GM13976 (cell line): ENCODE measurements at regions of chr7 and their contacts with region 1.

Region 1: GRCh38 chr7:85890244-85890811 is 703.5 kb upstream of the SEMA3D start:
- DNase-seq: peak; percentile 39
- CTCF ChIP-seq: no peak

Region 2: DNA sequence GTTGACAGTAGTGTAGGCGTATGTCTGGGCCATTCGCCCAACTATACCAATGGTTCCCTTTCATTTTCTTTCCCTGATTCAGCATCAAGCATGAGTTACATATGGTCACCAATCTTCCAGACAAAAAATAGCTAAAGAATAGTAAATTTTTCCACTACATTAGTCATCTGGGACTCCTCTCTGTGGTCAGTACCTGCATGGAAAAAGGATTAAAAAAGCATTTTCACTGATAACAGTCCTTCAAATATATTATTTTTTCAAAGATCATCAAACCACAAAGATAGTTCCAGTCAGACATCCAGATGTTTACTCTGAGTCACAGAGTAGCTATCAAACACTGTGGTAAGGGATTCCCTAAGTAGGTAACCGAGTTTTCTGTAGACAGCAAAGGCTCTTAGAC is 400.8 kb before region 1 on chr7:
- in situ Hi-C with region 1: no loop called
- DNase-seq: no peak
- CTCF ChIP-seq: no peak

Region 3: DNA sequence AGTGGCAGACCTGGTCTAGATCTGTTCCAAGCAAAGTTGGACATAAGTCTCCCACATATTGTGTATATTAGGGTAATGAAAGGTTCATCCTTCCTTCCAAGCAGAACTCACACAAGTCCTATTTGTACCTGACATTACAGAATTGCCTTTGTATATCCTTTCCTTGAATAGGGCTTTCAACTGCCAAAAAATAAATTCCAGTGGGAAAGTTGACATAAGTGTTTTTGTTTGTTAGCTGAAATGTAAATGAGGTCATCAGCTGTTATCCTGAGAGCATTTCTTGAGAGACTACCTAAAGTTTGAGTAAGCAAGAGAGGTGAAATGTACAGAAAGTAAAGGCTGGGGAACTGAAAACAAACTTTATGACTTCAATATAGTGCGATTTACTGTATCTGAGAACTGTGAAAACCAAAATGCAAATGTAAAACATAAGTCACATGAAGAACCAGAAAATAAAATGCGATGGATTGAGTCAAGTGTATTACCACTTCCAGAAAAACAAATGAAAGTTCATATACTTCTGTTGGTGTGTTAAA is 176.2 kb before region 1 on chr7:
- in situ Hi-C with region 1: no loop called
- DNase-seq: no peak
- CTCF ChIP-seq: no peak

Region 4: DNA sequence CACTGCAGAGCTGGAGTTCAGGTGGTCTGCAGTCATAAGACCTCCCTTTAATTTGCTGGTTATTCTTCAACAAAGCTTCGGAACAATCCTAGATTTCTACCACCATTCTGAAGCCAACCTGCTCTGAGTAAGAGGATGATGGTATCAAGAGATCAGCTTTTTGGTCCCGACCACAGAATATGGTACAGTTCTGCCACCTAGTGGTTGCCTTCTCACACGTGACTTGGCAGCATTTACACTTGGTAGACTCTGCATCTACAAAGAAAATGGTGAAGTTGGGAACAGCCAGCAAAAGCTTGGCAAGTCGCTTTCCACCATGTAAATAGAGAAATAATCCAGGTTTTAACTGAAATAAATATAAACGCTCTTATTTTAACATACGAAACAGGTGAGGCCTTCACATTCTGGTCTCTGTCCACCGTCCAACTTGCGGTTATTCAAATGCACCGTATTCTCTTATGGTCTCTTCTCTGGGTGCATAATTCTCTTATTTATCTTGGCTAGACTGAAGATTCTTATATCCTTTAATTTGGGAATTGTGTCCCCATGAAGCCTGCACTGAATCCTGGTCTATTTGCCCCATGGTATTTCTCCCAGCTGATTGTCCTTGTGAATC is 579.5 kb after region 1 on chr7:
- in situ Hi-C with region 1: loop called (anchors 25 kb)
- DNase-seq: peak; percentile 41
- CTCF ChIP-seq: peak; percentile 76

Region 5: DNA sequence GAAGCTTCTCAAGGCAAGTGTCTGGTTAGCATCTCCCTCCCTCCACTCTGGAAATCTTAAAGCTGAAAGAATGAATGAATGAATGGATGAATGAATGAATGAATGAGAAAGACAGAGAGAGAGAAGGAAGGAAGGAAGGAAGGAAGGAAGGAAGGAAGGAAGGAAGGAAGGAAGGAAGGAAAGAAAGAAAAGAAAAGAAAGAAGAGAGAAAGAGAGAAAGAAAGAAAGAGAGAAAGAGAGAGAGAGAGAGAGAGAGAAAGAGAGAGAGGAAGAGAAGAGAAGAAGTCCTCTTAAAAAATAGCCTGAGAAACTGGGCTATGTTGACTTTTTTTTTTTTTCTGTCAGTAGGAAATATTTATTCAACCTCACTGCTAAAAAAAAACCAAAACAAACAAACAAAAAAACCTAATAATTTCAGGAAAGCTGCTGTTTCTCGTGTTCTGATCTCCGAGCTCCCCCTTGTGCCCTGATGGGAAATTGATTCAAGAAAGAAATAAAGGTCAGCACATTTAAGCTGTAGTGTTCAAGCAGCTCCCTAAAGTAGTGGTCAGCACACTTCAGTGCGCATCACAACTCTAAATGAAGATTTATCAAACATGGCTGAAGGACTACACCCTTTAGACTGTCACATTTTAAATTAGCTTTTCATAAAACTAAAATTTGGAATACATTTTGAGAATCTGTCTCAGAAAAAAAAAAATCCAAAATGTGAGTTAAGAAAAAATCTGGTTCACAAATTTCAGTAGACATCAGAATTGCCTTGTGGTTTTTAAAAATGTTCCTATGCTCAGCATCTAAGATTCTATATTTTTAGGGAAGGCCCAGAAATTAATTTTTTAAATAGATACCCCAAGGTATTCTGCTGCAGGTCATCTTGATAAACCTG is 1014.9 kb after region 1 on chr7:
- in situ Hi-C with region 1: loop called (anchors 25 kb)
- DNase-seq: peak; percentile 6
- CTCF ChIP-seq: peak; percentile 64